Activated naive CD4-positive, alpha-beta T cell treated with anti-CD3 and anti-CD28 coated beads for 36 hours (primary cell): ENCODE measurements at regions of chr2 and their contacts with region 1.

Region 1: GRCh38 chr2:234488913-234489451 is 7.9 kb downstream of the ARL4C start:
- DNase-seq: peak; percentile 79
- H3K4me3 Mint-ChIP-seq: peak overlapping the region; percentile 78
- H3K27ac Mint-ChIP-seq: peak overlapping the region; percentile 94
- H3K4me1 Mint-ChIP-seq: peaks cover 84% of the 10 kb centered on the region
- H3K27me3 Mint-ChIP-seq: no peaks in the 10 kb centered on the region

Region 2: DNA sequence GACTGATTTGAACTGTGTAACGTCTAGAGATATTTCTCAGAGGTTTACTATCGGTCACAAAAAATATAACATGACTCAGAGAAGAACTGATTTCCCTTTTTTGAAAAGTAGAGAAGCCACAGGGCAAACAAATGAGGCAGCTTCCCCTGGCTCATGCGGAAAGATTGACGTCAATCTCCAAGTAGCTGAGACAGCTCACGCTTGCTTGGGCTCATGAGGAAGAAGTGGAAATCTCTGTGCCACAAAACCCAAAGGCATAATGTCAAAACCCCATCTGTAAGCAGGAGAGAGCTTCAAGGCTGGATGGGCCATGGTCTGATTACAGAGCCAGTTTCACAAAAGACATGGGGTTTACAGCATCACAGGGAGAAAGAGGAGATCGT is 180.2 kb before region 1 on chr2:
- CTCF ChIA-PET with region 1: no interaction called
- intact Hi-C with region 1: loop called (anchors 1 kb)
- DNase-seq: peak; percentile 89
- H3K4me3 Mint-ChIP-seq: peak overlapping the region; percentile 53
- H3K27ac Mint-ChIP-seq: peak overlapping the region; percentile 99
- H3K4me1 Mint-ChIP-seq: peaks cover 50% of the 10 kb centered on the region
- H3K27me3 Mint-ChIP-seq: no peaks in the 10 kb centered on the region

Region 3: DNA sequence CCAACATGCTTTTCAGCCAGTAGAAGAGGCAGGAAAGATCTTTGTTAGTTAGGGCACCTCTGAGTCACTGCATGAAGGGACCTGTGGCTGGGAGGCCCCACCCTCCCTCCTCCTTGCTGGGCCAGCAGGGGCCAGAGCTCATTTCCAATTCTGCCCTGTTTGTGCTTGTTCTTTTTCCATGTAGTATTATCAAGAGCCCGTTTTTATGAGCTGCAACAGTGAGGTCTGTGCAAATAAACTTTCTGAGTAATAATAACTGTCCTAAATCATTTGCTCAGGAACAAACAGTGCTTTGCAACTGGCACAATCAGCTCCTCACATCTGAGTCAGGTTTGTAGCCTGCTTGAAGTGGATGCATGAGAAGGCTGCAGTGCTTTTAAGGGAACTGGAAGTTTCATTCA is 120.1 kb before region 1 on chr2:
- CTCF ChIA-PET with region 1: no interaction called
- intact Hi-C with region 1: loop called (anchors 2 kb)
- DNase-seq: peak; percentile 58
- H3K4me3 Mint-ChIP-seq: no peak overlapping the region
- H3K27ac Mint-ChIP-seq: peak overlapping the region; percentile 74
- H3K4me1 Mint-ChIP-seq: peaks cover 73% of the 10 kb centered on the region
- H3K27me3 Mint-ChIP-seq: no peaks in the 10 kb centered on the region

Region 4: DNA sequence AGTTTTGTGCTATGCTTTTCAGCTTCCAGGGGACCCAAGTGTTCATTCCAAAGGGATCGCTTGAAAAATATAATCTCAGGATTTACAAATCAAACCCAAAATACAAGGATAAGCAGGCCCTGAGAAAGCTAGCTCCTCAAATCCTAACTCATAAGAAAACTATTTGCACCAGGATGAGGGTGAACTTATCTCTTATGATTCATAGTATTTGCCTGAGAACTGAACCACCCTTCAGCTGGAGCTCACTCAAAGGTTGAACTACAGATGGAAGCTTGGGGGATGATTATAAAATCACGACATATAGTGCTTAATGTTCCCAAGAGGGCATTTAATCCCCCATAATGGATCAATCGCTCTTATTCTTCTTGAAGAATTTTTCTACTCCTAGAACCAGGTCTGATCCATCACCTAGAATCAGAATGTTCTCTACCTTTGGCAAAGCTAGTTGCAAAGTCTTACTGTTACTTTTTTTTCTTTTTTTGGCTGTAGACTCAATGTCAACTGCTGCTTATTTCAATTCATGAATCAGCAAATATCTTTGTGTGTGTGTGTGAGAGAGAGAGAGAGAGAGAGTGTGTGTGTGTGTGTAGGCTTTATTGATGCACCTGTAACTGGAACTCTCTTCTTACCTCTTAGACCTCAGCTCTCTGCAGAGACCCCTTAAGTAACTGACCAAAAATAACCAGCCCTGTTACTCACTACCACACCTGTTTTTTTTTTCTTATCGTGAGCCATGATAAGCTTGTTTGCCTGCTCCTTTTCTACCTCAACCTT is 36.9 kb before region 1 on chr2:
- CTCF ChIA-PET with region 1: interaction called, 16 read pairs
- intact Hi-C with region 1: loop called (anchors 1 kb)
- DNase-seq: no peak
- H3K4me3 Mint-ChIP-seq: peak overlapping the region; percentile 78
- H3K27ac Mint-ChIP-seq: peak overlapping the region; percentile 96
- H3K4me1 Mint-ChIP-seq: peaks cover 73% of the 10 kb centered on the region
- H3K27me3 Mint-ChIP-seq: no peaks in the 10 kb centered on the region

Region 5: DNA sequence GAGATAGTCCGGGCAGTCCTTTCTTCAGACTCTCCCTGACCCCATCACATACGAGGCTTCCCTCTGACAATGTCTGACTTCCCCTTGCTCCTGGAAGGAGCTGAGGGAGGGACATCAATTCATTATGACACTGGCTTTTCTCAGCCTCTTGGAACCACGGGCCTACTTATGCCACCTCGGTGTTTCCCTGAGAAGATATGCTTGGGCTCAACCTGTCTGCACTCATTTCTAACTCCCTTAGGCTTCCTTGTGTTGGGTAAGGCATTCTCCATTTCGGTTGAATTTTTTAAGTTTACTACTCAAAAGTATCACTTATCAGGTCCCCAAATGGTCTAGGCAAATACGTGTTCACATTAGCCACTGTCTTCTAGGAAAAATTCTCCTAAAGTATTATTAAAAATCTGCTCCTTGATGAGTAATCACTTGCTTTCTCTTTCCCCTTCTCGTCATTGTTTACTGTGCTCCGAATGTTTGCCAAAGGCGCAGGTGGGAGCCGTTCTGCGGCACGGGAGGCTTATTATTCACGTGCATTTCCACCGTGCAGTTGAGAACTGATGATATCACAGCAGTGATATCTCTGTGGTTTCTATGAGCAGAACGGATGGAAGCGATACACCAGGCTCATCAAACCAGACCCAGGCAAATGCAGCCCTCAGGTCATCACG is 25.2 kb before region 1 on chr2:
- CTCF ChIA-PET with region 1: interaction called, 11 read pairs
- intact Hi-C with region 1: loop called (anchors 1 kb)
- DNase-seq: peak; percentile 83
- H3K4me3 Mint-ChIP-seq: peak overlapping the region; percentile 72
- H3K27ac Mint-ChIP-seq: peak overlapping the region; percentile 89
- H3K4me1 Mint-ChIP-seq: peaks cover 73% of the 10 kb centered on the region
- H3K27me3 Mint-ChIP-seq: no peaks in the 10 kb centered on the region

Region 6: DNA sequence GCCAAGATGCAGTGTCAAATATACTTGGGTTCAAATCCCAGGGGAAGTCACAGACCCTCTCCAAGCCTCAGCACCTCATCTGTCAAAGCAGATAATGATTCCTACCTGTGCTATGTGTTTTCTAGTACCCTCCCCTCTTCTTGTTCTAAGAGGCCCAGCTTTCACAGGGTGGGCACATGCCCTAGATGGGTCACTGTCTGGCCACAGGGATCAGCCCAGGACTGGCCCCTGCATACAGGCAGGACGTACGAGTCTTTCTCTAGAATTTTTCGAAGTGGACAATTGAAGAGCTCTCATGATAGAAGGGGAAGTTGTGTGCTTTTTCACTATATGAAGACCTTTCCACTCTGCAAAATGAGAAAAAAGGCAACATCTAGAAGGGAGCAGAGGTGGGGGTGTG is 14.3 kb before region 1 on chr2:
- CTCF ChIA-PET with region 1: no interaction called
- intact Hi-C with region 1: loop called (anchors 1 kb)
- DNase-seq: no peak
- H3K4me3 Mint-ChIP-seq: no peak overlapping the region
- H3K27ac Mint-ChIP-seq: peak overlapping the region; percentile 83
- H3K4me1 Mint-ChIP-seq: peaks cover 45% of the 10 kb centered on the region
- H3K27me3 Mint-ChIP-seq: no peaks in the 10 kb centered on the region